ENCODE measurements at regions of chr7 and their contacts with region 1.

Region 1: DNA sequence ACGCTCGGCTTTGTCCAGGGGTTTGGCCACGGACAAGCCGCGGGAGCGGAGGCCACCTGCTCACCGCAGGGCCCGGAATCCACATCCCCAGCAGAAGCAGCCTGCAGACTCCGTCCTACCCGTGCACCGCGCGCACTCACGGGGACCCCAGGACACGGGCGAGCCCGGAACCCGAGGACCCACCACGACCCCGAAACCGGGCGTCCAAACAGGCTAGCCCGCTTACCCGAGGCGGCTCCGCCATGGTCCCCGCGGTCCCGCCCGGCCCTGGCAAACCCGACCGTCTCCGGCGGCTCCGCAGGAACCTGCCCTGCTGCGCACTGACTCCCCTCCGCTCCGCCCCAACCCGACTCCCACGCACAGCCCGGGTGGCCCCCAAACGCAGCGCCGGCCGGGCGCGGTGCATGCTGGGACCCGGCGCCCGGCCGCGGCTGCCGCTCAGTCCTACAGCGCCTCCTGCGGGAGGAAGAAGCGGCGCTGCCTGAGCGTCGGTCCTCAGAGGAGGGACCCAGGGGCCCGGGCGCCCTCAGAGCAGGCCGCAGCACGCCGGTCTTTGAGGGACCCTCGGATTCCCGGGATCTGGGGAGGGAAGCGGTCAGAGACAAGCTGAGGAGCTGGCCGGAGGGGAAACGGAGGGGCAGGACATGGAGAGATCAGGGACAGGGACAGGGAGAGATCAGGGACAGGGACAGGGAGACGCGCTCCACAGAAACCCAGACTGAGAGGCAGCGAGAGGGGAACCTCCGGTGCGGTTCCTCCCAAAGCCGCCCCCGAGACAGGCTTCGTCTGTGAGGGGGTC is at the start of gene ZNF786:
- DNase-seq: peak; percentile 29 to 92
- H3K4me3 ChIP-seq: peak within 1 kb of the TSS; percentile 95 to 97
- H3K27ac ChIP-seq: peak within 1 kb of the TSS; percentile 96 to 97
- H3K4me1 ChIP-seq: peaks cover 0 to 7% of the 10 kb centered on the region in 2 donors
- H3K27me3 ChIP-seq: no peaks in the 10 kb centered on the region
- CTCF ChIP-seq: peak; percentile 91 to 97 (median 94)
- total RNA-seq, gene ZNF786: 8.4 TPM

Region 2: DNA sequence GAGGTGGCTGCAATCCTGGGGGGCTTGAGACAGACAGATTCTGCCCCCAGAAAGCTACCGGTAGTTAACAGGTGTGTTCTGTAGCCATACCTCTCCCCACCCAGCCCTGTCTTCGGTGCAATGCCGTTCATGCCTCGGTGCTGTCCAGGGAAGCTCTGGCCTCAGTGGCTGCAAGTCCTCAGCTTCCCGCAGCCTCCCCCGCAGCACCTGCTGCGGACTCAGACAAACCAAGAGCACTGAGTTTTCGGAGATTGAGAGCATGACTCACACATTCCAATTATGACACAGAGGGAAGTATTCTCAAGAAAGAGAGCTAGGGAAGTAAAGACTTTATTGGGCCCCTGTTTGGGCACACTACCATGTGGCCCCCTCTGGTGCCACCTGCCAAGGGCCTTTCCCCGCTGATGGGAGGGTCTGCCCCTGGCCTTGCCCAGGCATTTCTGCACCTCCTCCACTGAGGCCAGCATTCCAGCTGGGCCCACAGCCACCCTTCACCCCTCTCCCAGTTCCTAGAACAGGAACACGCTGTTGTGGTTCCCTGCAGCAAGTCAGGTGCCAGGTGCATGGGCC is 176.3 kb before region 1 on chr7:
- intact Hi-C with region 1: no loop called
- DNase-seq: no peak
- H3K4me3 ChIP-seq: no peak overlapping the region
- H3K27ac ChIP-seq: no peak overlapping the region
- H3K4me1 ChIP-seq: no peaks in the 10 kb centered on the region
- H3K27me3 ChIP-seq: no peaks in the 10 kb centered on the region
- CTCF ChIP-seq: no peak

Region 3: DNA sequence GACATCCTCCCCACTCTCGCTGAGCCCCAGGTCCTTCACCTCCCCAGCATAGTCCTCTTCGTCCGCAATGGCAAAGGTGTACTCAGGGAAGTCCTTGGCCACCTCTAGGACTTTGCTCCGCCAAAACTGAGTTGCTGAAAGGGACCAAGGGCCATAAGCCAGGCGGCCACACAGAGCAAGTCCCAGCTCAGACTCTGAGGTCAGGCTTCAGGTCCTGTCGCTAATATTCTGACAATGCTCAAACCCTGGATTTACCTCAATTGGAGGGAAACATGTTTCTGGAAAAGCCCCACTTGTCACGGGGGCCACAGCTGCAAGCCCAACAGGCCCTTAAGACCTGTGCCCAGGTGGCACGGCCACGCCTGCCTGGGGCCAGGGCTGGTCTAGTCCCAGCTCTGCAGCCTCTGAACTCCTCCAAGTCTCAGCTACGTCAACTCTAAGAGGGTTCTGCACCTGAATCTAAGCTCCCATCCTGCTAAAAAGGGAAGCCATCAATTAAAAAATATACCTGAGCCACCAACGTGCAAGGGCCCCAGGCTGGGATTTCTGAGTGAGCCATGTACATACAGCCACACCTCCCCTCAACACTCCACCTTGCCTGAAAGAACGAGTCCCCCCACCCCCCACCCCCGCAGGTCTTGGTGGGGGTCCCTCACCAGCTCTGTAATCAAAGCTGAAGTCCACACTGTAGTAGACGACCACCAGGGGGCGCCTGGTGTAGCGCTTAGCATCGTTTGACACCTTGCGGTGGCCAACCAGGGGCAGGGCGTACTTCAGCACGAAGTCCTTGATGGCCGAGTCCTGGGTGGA is 85.2 kb before region 1 on chr7:
- intact Hi-C with region 1: loop called (anchors 1 kb)
- DNase-seq: peak in 1 of 2 donors; percentile 89
- H3K4me3 ChIP-seq: no peak overlapping the region
- H3K27ac ChIP-seq: no peak overlapping the region
- H3K4me1 ChIP-seq: no peaks in the 10 kb centered on the region
- H3K27me3 ChIP-seq: no peaks in the 10 kb centered on the region
- CTCF ChIP-seq: peak; percentile 79 to 94 (median 86)

Region 4: DNA sequence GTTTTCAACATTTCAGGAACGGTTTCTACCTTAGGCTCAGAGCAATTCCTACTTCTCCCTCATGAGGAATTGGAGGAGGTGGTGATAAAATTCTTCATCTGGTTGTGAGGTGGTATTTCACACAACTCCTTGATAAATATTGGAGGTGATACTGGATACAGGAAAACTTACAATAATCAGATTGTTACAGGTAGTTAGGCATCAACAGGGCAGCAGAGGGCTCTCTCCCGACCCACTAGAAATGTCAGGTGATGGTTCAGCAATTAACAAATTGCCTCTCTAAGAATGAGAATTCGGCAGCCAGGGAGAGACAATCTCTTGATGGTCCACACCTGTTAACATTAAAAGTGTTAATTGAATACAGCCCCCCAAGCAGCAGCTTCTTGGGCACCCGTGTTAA is 22.7 kb before region 1 on chr7:
- intact Hi-C with region 1: loop called (anchors 1 kb)
- DNase-seq: no peak
- H3K4me3 ChIP-seq: no peak overlapping the region
- H3K27ac ChIP-seq: no peak overlapping the region
- H3K4me1 ChIP-seq: no peaks in the 10 kb centered on the region
- H3K27me3 ChIP-seq: no peaks in the 10 kb centered on the region
- CTCF ChIP-seq: no peak

Region 5: GRCh38 chr7:149154030-149154429 is 63.4 kb after region 1 on chr7:
- intact Hi-C with region 1: no loop called
- DNase-seq: no peak
- H3K4me3 ChIP-seq: no peak overlapping the region
- H3K27ac ChIP-seq: no peak overlapping the region
- H3K4me1 ChIP-seq: peaks cover 0 to 6% of the 10 kb centered on the region in 2 donors
- H3K27me3 ChIP-seq: no peaks in the 10 kb centered on the region
- CTCF ChIP-seq: no peak

Region 6: GRCh38 chr7:149284850-149285626 is 194.4 kb after region 1 on chr7:
- intact Hi-C with region 1: no loop called
- DNase-seq: peak; percentile 79 to 96
- H3K4me3 ChIP-seq: peak overlapping the region; percentile 66 to 88
- H3K27ac ChIP-seq: peak overlapping the region; percentile 20 to 48
- H3K4me1 ChIP-seq: peaks cover 3 to 14% of the 10 kb centered on the region in 2 donors
- H3K27me3 ChIP-seq: no peaks in the 10 kb centered on the region
- CTCF ChIP-seq: no peak

Region 7: GRCh38 chr7:149456481-149457421 is 366.2 kb after region 1 on chr7:
- intact Hi-C with region 1: no loop called
- DNase-seq: no peak
- H3K4me3 ChIP-seq: no peak overlapping the region
- H3K27ac ChIP-seq: no peak overlapping the region
- H3K4me1 ChIP-seq: peaks cover 3 to 9% of the 10 kb centered on the region in 2 donors
- H3K27me3 ChIP-seq: no peaks in the 10 kb centered on the region
- CTCF ChIP-seq: no peak

Measured in ascending aorta (tissue), 2 donors.